ENCODE measurements at regions of chr11 and their contacts with region 1.

Region 1: GRCh38 chr11:27277843-27278242 is 85.2 kb downstream of the CCDC34 start:
- DNase-seq: no peak
- ATAC-seq: no peak
- H3K4me3 ChIP-seq: no peak overlapping the region
- H3K4me3 Mint-ChIP-seq: no peak overlapping the region
- H3K27ac ChIP-seq: no peak overlapping the region
- H3K27ac Mint-ChIP-seq: no peak overlapping the region
- H3K4me1 ChIP-seq: no peaks in the 10 kb centered on the region
- H3K4me1 Mint-ChIP-seq: no peaks in the 10 kb centered on the region
- H3K27me3 ChIP-seq: no peaks in the 10 kb centered on the region
- H3K27me3 Mint-ChIP-seq: peaks cover 9% of the 10 kb centered on the region
- CTCF ChIP-seq: no peak

Region 2: DNA sequence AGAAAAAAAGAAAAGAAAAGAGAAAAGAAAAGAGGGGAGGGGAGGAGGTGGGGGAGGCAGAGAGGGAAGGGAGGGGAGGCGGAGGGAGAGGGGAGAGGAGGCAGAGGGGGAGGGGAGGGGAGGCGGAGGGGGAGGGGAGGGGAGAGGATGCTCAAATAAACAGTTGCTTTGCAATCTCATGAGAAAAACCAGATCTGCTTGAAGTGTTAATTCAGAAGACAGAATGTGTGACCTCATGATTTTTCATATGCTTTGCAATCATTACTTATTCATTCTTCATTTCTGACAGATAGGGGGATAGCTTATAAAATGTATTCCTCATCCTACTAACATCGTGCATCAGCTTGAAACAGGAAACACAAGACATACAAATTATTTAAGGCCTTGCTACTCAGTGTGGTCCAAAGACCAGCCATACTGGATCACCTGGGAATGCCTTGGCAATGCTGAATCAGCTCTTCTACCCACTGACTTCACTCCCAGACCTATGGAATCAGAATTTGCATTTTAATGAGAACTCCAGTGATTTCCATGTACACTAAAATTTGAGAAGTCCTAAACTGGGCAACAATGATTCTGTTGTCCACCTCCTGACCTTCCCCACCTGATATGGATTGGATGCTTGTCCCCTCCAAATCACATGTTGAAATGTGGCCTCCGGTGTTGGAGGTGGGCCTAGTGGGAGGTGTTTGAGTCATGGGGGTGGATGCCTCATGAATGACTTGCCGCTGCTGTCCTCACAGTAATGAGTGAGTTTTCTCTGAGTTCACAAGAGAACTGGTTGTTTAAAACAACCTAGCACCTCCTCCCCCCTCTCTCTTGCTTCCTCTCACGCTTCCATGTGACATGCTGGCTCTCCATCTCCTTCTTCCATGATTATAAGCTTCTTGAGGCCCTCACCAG is 15.9 kb after region 1 on chr11:
- CTCF ChIA-PET with region 1: no interaction called
- POLR2A ChIA-PET with region 1: no interaction called
- intact Hi-C with region 1: loop called in 1 of 2 experiments (anchors 2 kb)
- DNase-seq: no peak
- ATAC-seq: no peak
- H3K4me3 ChIP-seq: no peak overlapping the region
- H3K4me3 Mint-ChIP-seq: no peak overlapping the region
- H3K27ac ChIP-seq: no peak overlapping the region
- H3K27ac Mint-ChIP-seq: no peak overlapping the region
- H3K4me1 ChIP-seq: no peaks in the 10 kb centered on the region
- H3K4me1 Mint-ChIP-seq: no peaks in the 10 kb centered on the region
- H3K27me3 ChIP-seq: no peaks in the 10 kb centered on the region
- H3K27me3 Mint-ChIP-seq: peaks cover 3% of the 10 kb centered on the region
- CTCF ChIP-seq: no peak

Region 3: GRCh38 chr11:27857014-27857413 is 579.2 kb after region 1 on chr11:
- CTCF ChIA-PET with region 1: no interaction called
- POLR2A ChIA-PET with region 1: no interaction called
- intact Hi-C with region 1: no loop called
- DNase-seq: no peak
- ATAC-seq: no peak
- H3K4me3 ChIP-seq: no peak overlapping the region
- H3K4me3 Mint-ChIP-seq: no peak overlapping the region
- H3K27ac ChIP-seq: no peak overlapping the region
- H3K27ac Mint-ChIP-seq: no peak overlapping the region
- H3K4me1 ChIP-seq: no peaks in the 10 kb centered on the region
- H3K4me1 Mint-ChIP-seq: no peaks in the 10 kb centered on the region
- H3K27me3 ChIP-seq: no peaks in the 10 kb centered on the region
- H3K27me3 Mint-ChIP-seq: no peaks in the 10 kb centered on the region
- CTCF ChIP-seq: no peak